ENCODE measurements at regions of chr2 and their contacts with region 1.

Region 1: DNA sequence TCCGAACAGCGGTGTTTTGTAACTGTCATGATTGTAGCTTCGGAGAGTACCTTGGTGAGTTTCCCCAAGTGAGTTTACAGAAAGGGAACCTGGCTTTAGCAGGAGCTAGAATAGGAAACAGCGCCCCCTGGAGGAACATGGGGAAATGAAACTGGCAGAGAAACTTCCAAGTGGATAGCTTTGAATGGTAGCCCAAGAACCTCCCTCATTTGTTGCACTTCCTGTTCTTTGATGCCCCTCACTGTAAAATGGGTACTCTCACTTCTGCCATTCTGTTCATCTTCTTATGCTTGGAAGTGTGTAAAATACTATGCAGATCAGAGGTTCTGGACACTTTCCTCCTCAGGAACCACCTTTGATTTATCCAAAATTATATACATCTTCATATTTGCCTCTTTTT is 36.2 kb downstream of the CHST10 start:
- DNase-seq: peak; percentile 31 to 81
- ATAC-seq: peak; percentile 80 to 92
- H3K4me3 ChIP-seq: no peak overlapping the region
- H3K27ac ChIP-seq: peak overlapping the region in 1 of 2 experiments; percentile 40; a peak in 2 of 6 replicates
- H3K4me1 ChIP-seq: 0 out of 3 replicates have a peak, but pooled peaks cover 2% of the 10 kb centered on the region
- CTCF ChIP-seq: peak; percentile 84
- EP300 ChIP-seq: no peak
- POLR2A ChIP-seq: no peak
- RAD21 ChIP-seq: peak; percentile 82 to 90

Region 2: DNA sequence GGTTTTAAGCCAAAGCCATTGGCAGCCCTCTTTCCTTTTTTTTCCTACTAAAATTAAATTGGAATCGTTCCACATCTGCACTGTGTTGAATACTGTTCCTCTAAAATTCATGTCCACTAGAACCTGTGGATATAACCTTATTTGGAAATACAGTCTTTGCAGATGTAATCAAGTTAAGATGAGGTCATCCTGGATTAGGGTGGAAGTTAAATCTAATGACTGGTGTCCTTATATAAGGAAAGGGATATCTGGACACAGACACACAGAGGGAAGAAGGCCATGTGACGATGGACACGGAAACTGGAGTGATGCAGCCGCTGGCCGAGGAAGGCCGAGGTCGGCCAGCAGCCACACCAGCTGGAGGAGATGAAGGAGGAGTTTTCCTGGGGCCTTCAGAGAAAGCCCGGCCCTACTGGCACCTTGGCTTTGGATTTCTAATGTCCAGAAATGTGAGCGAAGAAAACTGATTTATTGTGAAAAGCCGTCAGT is 108.4 kb before region 1 on chr2:
- CTCF ChIA-PET with region 1: interaction called, 188 read pairs
- POLR2A ChIA-PET with region 1: no interaction called
- DNase-seq: no peak
- ATAC-seq: no peak
- H3K4me3 ChIP-seq: no peak overlapping the region
- H3K27ac ChIP-seq: no peak overlapping the region
- H3K4me1 ChIP-seq: peaks cover 9% of the 10 kb centered on the region; the same call in 1 of the 3 replicates
- CTCF ChIP-seq: no peak
- EP300 ChIP-seq: no peak
- POLR2A ChIP-seq: no peak
- RAD21 ChIP-seq: no peak

Region 3: GRCh38 chr2:100291120-100291970 is 89.9 kb before region 1 on chr2:
- CTCF ChIA-PET with region 1: interaction called, 27 read pairs
- POLR2A ChIA-PET with region 1: interaction called, 3 read pairs
- DNase-seq: peak; percentile 90 to 99
- ATAC-seq: peak; percentile 91 to 93
- H3K4me3 ChIP-seq: peak overlapping the region; percentile 22
- H3K27ac ChIP-seq: peak overlapping the region; percentile 98 to 99
- H3K4me1 ChIP-seq: peaks cover 47% of the 10 kb centered on the region
- CTCF ChIP-seq: no peak
- EP300 ChIP-seq: peak; percentile 86 to 93; a peak in 4 of 5 replicates
- POLR2A ChIP-seq: no peak
- RAD21 ChIP-seq: peak; percentile 18 to 47; a peak in 3 of 5 replicates

Region 4: DNA sequence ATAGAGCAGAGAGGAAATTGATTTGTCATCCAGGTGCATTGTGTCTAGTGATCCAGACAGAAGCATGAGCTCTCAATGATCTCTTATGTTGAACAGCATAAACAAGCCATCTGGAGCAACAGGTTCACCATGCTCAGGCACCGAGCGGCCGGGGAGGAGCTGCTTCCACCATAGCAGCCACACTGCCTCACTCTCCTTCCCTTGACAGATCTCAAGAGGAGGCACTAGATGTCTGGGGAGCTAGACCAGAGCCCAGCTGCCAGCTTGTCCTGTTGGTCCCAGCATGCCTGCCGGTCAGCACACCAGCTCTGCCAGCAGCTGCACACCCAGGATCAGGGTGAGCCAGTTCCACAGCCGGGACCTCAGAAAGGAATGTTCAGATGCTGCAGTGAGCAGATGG is 41.4 kb before region 1 on chr2:
- CTCF ChIA-PET with region 1: interaction called, 10 read pairs
- POLR2A ChIA-PET with region 1: no interaction called
- DNase-seq: no peak
- ATAC-seq: no peak
- H3K4me3 ChIP-seq: no peak overlapping the region
- H3K27ac ChIP-seq: no peak overlapping the region
- H3K4me1 ChIP-seq: no peaks in the 10 kb centered on the region
- CTCF ChIP-seq: no peak
- EP300 ChIP-seq: no peak
- POLR2A ChIP-seq: no peak
- RAD21 ChIP-seq: no peak

Region 5: GRCh38 chr2:100391735-100392515 is 10.7 kb after region 1 on chr2:
- CTCF ChIA-PET with region 1: interaction called, 29 read pairs
- POLR2A ChIA-PET with region 1: no interaction called
- DNase-seq: no peak
- ATAC-seq: no peak
- H3K4me3 ChIP-seq: no peak overlapping the region
- H3K27ac ChIP-seq: no peak overlapping the region
- H3K4me1 ChIP-seq: no peaks in the 10 kb centered on the region
- CTCF ChIP-seq: no peak
- EP300 ChIP-seq: no peak
- POLR2A ChIP-seq: no peak
- RAD21 ChIP-seq: no peak

Measured in A549 (cell line).